IMR-90 (cell line): ENCODE measurements at regions of chr11 and their contacts with region 1.

Region 1: GRCh38 chr11:83671289-83671688 is 385.1 kb upstream of the CCDC90B start:
- DNase-seq: peak; percentile 4
- ATAC-seq: peak; percentile 35; the same call in 1 of the 2 replicates
- H3K4me3 ChIP-seq: no peak overlapping the region
- H3K27ac ChIP-seq: no peak overlapping the region
- H3K4me1 ChIP-seq: no peaks in the 10 kb centered on the region
- H3K27me3 ChIP-seq: no peaks in the 10 kb centered on the region
- CTCF ChIP-seq: peak; percentile 37
- POLR2A ChIP-seq: no peak
- RAD21 ChIP-seq: peak; percentile 48

Region 2: DNA sequence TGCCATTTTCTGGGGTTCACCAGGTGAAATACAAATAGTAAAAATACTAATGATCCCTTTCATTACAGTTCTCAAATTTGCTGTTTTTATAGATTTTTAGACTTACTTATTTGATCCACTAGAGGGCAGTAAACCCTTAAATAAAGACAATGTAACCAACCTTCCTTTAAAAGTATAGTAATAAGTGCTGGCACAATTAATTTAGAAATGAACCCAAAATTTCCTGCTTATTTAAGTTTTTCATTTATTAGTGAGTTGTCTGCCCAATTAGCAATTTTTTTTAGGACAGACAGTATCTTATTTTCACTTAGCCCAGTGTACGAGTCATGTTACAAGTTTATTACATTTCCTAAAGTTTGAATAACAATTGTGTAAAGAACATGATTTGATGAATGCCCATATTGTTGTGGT is 765.0 kb before region 1 on chr11:
- CTCF ChIA-PET with region 1: no interaction called
- POLR2A ChIA-PET with region 1: no interaction called
- dilution Hi-C with region 1: no loop called
- in situ Hi-C with region 1: no loop called
- intact Hi-C with region 1: loop called (anchors 2 kb)
- DNase-seq: peak; percentile 43
- ATAC-seq: no peak
- H3K4me3 ChIP-seq: no peak overlapping the region
- H3K27ac ChIP-seq: no peak overlapping the region
- H3K4me1 ChIP-seq: no peaks in the 10 kb centered on the region
- H3K27me3 ChIP-seq: no peaks in the 10 kb centered on the region
- CTCF ChIP-seq: peak; percentile 59
- POLR2A ChIP-seq: no peak
- RAD21 ChIP-seq: peak; percentile 68

Region 3: GRCh38 chr11:83115551-83115950 is 555.7 kb before region 1 on chr11:
- CTCF ChIA-PET with region 1: no interaction called
- POLR2A ChIA-PET with region 1: no interaction called
- dilution Hi-C with region 1: no loop called
- in situ Hi-C with region 1: no loop called
- intact Hi-C with region 1: no loop called
- DNase-seq: no peak
- ATAC-seq: no peak
- H3K4me3 ChIP-seq: no peak overlapping the region
- H3K27ac ChIP-seq: no peak overlapping the region
- H3K4me1 ChIP-seq: peaks cover 14% of the 10 kb centered on the region
- H3K27me3 ChIP-seq: peaks cover 4% of the 10 kb centered on the region
- CTCF ChIP-seq: no peak
- POLR2A ChIP-seq: no peak
- RAD21 ChIP-seq: no peak

Region 4: DNA sequence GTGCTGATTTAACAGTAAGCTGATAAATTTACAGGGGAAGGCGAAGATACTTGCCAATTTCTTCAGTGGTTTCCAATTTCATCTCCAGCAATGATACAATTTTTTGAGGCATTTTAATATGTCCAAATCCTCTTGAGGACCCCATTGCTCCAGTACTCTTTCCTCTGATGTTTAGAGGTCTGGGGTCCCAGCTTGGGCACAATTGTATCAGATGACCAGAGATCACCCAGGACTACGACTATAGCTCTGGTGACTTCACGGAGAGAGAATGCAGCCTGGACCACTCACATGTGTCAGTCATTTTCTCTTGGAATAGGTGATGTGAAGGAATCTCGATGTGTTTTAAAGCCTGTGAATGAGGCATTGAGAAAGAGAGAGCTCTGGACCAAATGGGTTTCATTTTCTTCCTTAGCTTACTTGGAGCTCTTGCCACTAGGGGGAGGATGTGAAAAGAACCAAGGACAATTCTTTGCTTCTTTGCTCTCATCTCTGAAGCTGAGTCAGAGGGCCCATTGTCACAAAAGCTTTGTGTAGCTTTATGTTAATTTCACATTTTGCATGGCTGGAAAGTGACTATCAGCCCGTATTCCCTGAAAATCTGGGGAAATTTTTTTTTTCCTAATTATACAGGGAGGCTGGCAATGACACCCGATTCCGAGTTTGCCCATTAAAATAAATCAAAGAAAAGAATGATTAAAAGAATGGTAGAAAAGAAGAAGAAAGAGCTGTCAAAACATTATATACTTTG is 378.4 kb before region 1 on chr11:
- CTCF ChIA-PET with region 1: interaction called, 7 read pairs
- POLR2A ChIA-PET with region 1: no interaction called
- dilution Hi-C with region 1: no loop called
- in situ Hi-C with region 1: no loop called
- intact Hi-C with region 1: loop called (anchors 1 kb)
- DNase-seq: peak; percentile 73
- ATAC-seq: peak; percentile 94
- H3K4me3 ChIP-seq: peak overlapping the region; percentile 17; the same call in 1 of the 2 replicates
- H3K27ac ChIP-seq: no peak overlapping the region
- H3K4me1 ChIP-seq: no peaks in the 10 kb centered on the region
- H3K27me3 ChIP-seq: peaks cover 4% of the 10 kb centered on the region; the same call in 1 of the 2 replicates
- CTCF ChIP-seq: peak; percentile 77
- POLR2A ChIP-seq: no peak
- RAD21 ChIP-seq: peak; percentile 67

Region 5: DNA sequence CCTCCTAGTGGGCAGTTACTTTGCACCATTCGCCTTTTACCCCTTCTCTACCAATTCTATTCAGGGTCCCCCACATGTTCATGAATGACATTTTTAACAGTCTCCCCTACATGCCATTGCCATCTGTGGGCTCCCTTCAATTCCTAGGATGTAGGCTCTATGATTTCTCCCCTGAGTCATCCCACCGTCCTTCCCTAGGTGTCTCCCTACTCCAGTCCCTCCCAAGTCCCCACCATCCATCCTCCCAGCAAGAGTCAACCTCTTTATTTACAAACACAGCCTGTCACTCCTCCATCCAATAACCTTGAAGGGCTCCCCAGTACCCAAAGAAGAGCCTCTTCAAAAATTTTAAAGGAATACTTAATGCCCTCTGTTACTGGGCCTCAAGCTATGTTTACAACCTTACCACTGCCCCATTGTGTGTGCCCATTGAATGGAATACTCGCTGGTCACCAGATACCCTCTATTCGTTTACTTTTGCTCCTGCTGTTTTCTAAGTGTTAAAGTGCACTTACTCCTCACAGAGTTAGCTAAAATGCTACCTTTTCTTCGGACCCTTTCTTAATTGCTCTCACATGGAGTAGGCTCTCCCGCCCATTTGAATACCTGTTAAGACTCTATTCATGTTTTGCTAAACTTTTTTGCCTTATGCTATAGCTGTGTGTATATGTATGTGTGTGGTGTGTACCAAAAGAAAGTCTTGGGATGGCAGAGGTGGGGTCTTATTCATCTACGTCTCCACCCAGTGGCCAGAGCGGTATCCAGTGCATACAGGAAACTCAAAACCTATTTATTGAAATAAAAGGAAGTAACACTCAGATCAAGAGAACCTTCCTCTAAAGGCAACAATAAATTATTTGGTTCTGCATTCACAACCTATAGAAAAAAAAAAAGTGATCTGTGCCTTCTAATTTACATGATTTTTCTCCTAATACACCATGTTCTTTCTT is 149.4 kb before region 1 on chr11:
- CTCF ChIA-PET with region 1: interaction called, 3 read pairs
- POLR2A ChIA-PET with region 1: no interaction called
- dilution Hi-C with region 1: no loop called
- in situ Hi-C with region 1: no loop called
- intact Hi-C with region 1: loop called (anchors 2 kb)
- DNase-seq: peak; percentile 31
- ATAC-seq: peak; percentile 70
- H3K4me3 ChIP-seq: no peak overlapping the region
- H3K27ac ChIP-seq: no peak overlapping the region
- H3K4me1 ChIP-seq: no peaks in the 10 kb centered on the region
- H3K27me3 ChIP-seq: peaks cover 5% of the 10 kb centered on the region
- CTCF ChIP-seq: peak; percentile 50
- POLR2A ChIP-seq: no peak
- RAD21 ChIP-seq: peak; percentile 65

Region 6: GRCh38 chr11:83725728-83726127 is 54.4 kb after region 1 on chr11:
- CTCF ChIA-PET with region 1: no interaction called
- POLR2A ChIA-PET with region 1: no interaction called
- dilution Hi-C with region 1: no loop called
- in situ Hi-C with region 1: no loop called
- intact Hi-C with region 1: no loop called
- DNase-seq: no peak
- ATAC-seq: no peak
- H3K4me3 ChIP-seq: no peak overlapping the region
- H3K27ac ChIP-seq: no peak overlapping the region
- H3K4me1 ChIP-seq: no peaks in the 10 kb centered on the region
- H3K27me3 ChIP-seq: peaks cover 10% of the 10 kb centered on the region
- CTCF ChIP-seq: no peak
- POLR2A ChIP-seq: no peak
- RAD21 ChIP-seq: no peak